ENCODE measurements at regions of chr17 and their contacts with region 1.

Region 1: DNA sequence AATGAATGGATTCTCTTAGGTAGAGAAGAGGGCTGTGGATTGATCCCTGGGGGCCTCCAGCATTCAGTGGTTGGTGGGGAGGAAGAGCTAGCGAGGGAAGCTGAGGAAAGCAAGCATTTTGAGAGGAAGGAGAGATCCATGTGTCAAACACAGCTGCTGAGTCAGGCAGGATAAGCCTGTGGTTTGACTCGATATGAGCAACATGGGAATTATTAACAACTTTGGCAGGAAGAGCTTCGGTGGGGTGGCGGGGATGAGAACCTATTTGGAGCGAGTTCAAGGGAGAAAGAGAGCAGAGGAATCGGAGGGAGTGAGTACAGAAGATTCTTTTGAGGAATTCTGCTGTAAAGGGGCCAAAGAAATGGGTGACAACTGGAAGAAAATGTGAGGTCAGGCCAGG is 59.5 kb upstream of the CDC42EP4 start:
- DNase-seq: no peak
- ATAC-seq: no peak
- H3K4me3 ChIP-seq: no peak overlapping the region
- H3K27ac ChIP-seq: no peak overlapping the region
- H3K4me1 ChIP-seq: no peaks in the 10 kb centered on the region
- H3K27me3 ChIP-seq: peaks cover 0 to 4% of the 10 kb centered on the region in 2 experiments
- CTCF ChIP-seq: no peak
- EP300 ChIP-seq: no peak
- POLR2A ChIP-seq: no peak
- RAD21 ChIP-seq: no peak

Region 2: GRCh38 chr17:72985881-72986720 is 385.2 kb before region 1 on chr17:
- CTCF ChIA-PET with region 1: interaction called, 9 read pairs
- POLR2A ChIA-PET with region 1: no interaction called
- RAD21 ChIA-PET with region 1: interaction called, 7 read pairs
- SMC1A ChIA-PET with region 1: interaction called, 3 read pairs
- in situ Hi-C with region 1: no loop called
- intact Hi-C with region 1: loop called (anchors 5 kb)
- DNase-seq: peak; percentile 47
- ATAC-seq: peak; percentile 99
- H3K4me3 ChIP-seq: no peak overlapping the region
- H3K27ac ChIP-seq: no peak overlapping the region; the same call in 1 of the 2 replicates
- H3K4me1 ChIP-seq: peaks cover 10% of the 10 kb centered on the region
- H3K27me3 ChIP-seq: no peaks in the 10 kb centered on the region
- CTCF ChIP-seq: peak; percentile 84 to 88 (median 88)
- EP300 ChIP-seq: no peak
- POLR2A ChIP-seq: no peak
- RAD21 ChIP-seq: peak; percentile 81

Region 3: DNA sequence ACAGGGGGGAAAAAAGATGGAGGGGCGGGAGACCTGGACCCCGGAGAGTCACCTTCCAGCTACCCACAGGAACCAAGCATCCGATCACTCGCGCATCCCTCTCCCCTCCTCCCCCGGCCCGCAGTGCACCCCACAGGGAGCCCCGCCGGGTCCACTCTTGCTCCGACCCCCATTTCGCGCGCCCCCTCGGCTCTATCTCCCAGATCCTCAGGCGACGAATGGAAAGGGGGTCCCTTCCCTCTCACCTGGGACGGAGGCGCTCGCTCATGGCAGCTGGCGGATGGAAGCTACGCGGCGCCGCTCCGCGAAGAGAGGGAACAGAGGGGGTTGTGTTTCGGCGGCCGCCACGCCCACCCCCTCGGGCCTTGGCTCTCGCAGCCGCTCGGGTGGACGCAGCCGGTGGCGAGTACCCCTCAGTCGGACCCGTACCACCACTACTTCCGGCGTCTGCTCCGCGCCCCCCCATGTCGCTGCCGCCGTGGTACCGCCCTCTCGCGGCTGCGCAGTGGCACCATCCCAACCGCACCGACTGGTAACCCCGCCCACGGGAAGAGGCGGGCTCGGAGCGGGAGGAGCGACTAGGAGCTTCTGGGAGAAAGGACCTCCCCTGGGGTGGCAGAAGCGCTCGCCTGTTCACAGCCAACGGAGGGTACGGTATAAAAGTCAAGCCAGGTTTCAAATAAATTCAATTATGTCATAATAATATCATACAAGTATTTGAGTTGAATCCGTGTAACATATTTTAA is 139.3 kb before region 1 on chr17:
- CTCF ChIA-PET with region 1: interaction called, 15 read pairs
- POLR2A ChIA-PET with region 1: no interaction called
- RAD21 ChIA-PET with region 1: interaction called, 9 read pairs
- SMC1A ChIA-PET with region 1: interaction called, 4 read pairs
- in situ Hi-C with region 1: no loop called
- intact Hi-C with region 1: no loop called
- DNase-seq: peak; percentile 86
- ATAC-seq: peak; percentile 83
- H3K4me3 ChIP-seq: peak overlapping the region; percentile 87
- H3K27ac ChIP-seq: peak overlapping the region; percentile 89
- H3K4me1 ChIP-seq: peaks cover 20% of the 10 kb centered on the region
- H3K27me3 ChIP-seq: no peaks in the 10 kb centered on the region
- CTCF ChIP-seq: peak in 1 of 3 experiments; percentile 19; a peak in 2 of 6 replicates
- EP300 ChIP-seq: no peak; a peak in 1 of 4 replicates
- POLR2A ChIP-seq: peak; percentile 93
- RAD21 ChIP-seq: no peak

Region 4: GRCh38 chr17:73255671-73256181 is 115.6 kb before region 1 on chr17:
- CTCF ChIA-PET with region 1: interaction called, 365 read pairs
- POLR2A ChIA-PET with region 1: interaction called, 5 read pairs
- RAD21 ChIA-PET with region 1: interaction called, 218 read pairs
- SMC1A ChIA-PET with region 1: interaction called, 261 read pairs
- in situ Hi-C with region 1: loop called (anchors 5 kb)
- intact Hi-C with region 1: loop called (anchors 1 kb)
- DNase-seq: no peak
- ATAC-seq: peak; percentile 94
- H3K4me3 ChIP-seq: no peak overlapping the region
- H3K27ac ChIP-seq: no peak overlapping the region
- H3K4me1 ChIP-seq: no peaks in the 10 kb centered on the region
- H3K27me3 ChIP-seq: no peaks in the 10 kb centered on the region
- CTCF ChIP-seq: peak; percentile 95 to 98 (median 97)
- EP300 ChIP-seq: no peak
- POLR2A ChIP-seq: no peak
- RAD21 ChIP-seq: peak; percentile 97

Region 5: DNA sequence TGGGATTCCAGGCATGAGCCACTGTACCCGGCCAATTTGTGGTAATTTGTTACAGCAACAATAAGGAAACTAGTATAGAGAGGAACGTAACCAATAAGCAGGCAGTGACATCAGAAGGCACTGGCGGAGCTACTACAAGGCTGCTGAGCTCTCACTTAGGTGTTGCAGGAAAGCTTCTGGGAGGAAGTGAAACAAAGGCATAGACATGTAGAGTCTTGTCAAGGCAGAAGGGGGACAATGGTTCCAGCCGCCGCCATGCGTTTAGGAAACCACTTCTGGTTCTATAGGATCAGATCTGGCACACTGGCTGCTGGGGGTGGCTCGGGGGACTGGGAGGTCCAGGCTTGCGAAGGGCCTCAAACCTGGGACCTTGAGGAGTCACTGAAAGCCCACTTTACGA is 100.2 kb before region 1 on chr17:
- CTCF ChIA-PET with region 1: interaction called, 8 read pairs
- POLR2A ChIA-PET with region 1: no interaction called
- RAD21 ChIA-PET with region 1: interaction called, 12 read pairs
- SMC1A ChIA-PET with region 1: interaction called, 14 read pairs
- in situ Hi-C with region 1: no loop called
- intact Hi-C with region 1: no loop called
- DNase-seq: peak; percentile 88
- ATAC-seq: peak; percentile 99
- H3K4me3 ChIP-seq: no peak overlapping the region
- H3K27ac ChIP-seq: peak overlapping the region; percentile 82
- H3K4me1 ChIP-seq: peaks cover 14% of the 10 kb centered on the region
- H3K27me3 ChIP-seq: no peaks in the 10 kb centered on the region
- CTCF ChIP-seq: no peak
- EP300 ChIP-seq: peak; percentile 74 to 88; a peak in 3 of 4 replicates
- POLR2A ChIP-seq: 0 out of 2 replicates have a peak, but pooled peaks have one; percentile 38
- RAD21 ChIP-seq: no peak

Region 6: GRCh38 chr17:73311781-73312641 is 59.3 kb before region 1 on chr17 and contains the start of gene CDC42EP4:
- CTCF ChIA-PET with region 1: interaction called, 15 read pairs
- POLR2A ChIA-PET with region 1: interaction called, 7 read pairs
- RAD21 ChIA-PET with region 1: interaction called, 24 read pairs
- SMC1A ChIA-PET with region 1: interaction called, 5 read pairs
- in situ Hi-C with region 1: no loop called
- intact Hi-C with region 1: loop called (anchors 5 kb)
- DNase-seq: no peak
- ATAC-seq: peak; percentile 92
- H3K4me3 ChIP-seq: peak within 1 kb of the TSS; percentile 93
- H3K27ac ChIP-seq: peak within 1 kb of the TSS; percentile 69
- H3K4me1 ChIP-seq: peaks cover 4% of the 10 kb centered on the region
- H3K27me3 ChIP-seq: no peaks in the 10 kb centered on the region
- CTCF ChIP-seq: no peak
- EP300 ChIP-seq: no peak
- POLR2A ChIP-seq: peak; percentile 62
- RAD21 ChIP-seq: no peak
- polyA plus RNA-seq, gene CDC42EP4: 0.05 to 0.20 TPM

Region 7: GRCh38 chr17:73331060-73331459 is 40.2 kb before region 1 on chr17:
- CTCF ChIA-PET with region 1: no interaction called
- POLR2A ChIA-PET with region 1: no interaction called
- RAD21 ChIA-PET with region 1: no interaction called
- SMC1A ChIA-PET with region 1: no interaction called
- in situ Hi-C with region 1: no loop called
- intact Hi-C with region 1: no loop called
- DNase-seq: no peak
- ATAC-seq: no peak
- H3K4me3 ChIP-seq: no peak overlapping the region
- H3K27ac ChIP-seq: no peak overlapping the region
- H3K4me1 ChIP-seq: no peaks in the 10 kb centered on the region
- H3K27me3 ChIP-seq: no peaks in the 10 kb centered on the region
- CTCF ChIP-seq: no peak
- EP300 ChIP-seq: no peak
- POLR2A ChIP-seq: no peak
- RAD21 ChIP-seq: no peak

Region 8: GRCh38 chr17:73342050-73342522 is 29.2 kb before region 1 on chr17:
- CTCF ChIA-PET with region 1: interaction called, 39 read pairs
- POLR2A ChIA-PET with region 1: interaction called, 3 read pairs
- RAD21 ChIA-PET with region 1: interaction called, 14 read pairs
- SMC1A ChIA-PET with region 1: interaction called, 13 read pairs
- in situ Hi-C with region 1: no loop called
- intact Hi-C with region 1: no loop called
- DNase-seq: peak; percentile 20
- ATAC-seq: peak; percentile 84
- H3K4me3 ChIP-seq: no peak overlapping the region
- H3K27ac ChIP-seq: no peak overlapping the region
- H3K4me1 ChIP-seq: no peaks in the 10 kb centered on the region
- H3K27me3 ChIP-seq: no peaks in the 10 kb centered on the region
- CTCF ChIP-seq: no peak
- EP300 ChIP-seq: no peak
- POLR2A ChIP-seq: no peak
- RAD21 ChIP-seq: no peak

Region 9: GRCh38 chr17:73436954-73437353 is 65.7 kb after region 1 on chr17:
- CTCF ChIA-PET with region 1: no interaction called
- POLR2A ChIA-PET with region 1: no interaction called
- RAD21 ChIA-PET with region 1: no interaction called
- SMC1A ChIA-PET with region 1: no interaction called
- in situ Hi-C with region 1: no loop called
- intact Hi-C with region 1: no loop called
- DNase-seq: no peak
- ATAC-seq: no peak
- H3K4me3 ChIP-seq: no peak overlapping the region
- H3K27ac ChIP-seq: no peak overlapping the region
- H3K4me1 ChIP-seq: no peaks in the 10 kb centered on the region
- H3K27me3 ChIP-seq: no peaks in the 10 kb centered on the region; a peak in 1 of 4 replicates
- CTCF ChIP-seq: no peak
- EP300 ChIP-seq: no peak
- POLR2A ChIP-seq: no peak
- RAD21 ChIP-seq: no peak

Measured in GM12878 (cell line).